Common myeloid progenitor, CD34-positive (primary cell): ENCODE measurements at regions of chr4 and their contacts with region 1.

Region 1: GRCh38 chr4:165493359-165493758 is 114.6 kb downstream of the CPE start:
- DNase-seq: peak; percentile 66 to 84 (median 81)
- H3K4me3 ChIP-seq: peak overlapping the region in 3 of 7 experiments; percentile 19 to 55 (median 20)
- H3K27ac ChIP-seq: no peak overlapping the region
- H3K4me1 ChIP-seq: peaks cover 0 to 6% (median 3%) of the 10 kb centered on the region in 4 experiments
- H3K27me3 ChIP-seq: peaks cover 0 to 7% (median 3%) of the 10 kb centered on the region in 5 experiments

Region 2: DNA sequence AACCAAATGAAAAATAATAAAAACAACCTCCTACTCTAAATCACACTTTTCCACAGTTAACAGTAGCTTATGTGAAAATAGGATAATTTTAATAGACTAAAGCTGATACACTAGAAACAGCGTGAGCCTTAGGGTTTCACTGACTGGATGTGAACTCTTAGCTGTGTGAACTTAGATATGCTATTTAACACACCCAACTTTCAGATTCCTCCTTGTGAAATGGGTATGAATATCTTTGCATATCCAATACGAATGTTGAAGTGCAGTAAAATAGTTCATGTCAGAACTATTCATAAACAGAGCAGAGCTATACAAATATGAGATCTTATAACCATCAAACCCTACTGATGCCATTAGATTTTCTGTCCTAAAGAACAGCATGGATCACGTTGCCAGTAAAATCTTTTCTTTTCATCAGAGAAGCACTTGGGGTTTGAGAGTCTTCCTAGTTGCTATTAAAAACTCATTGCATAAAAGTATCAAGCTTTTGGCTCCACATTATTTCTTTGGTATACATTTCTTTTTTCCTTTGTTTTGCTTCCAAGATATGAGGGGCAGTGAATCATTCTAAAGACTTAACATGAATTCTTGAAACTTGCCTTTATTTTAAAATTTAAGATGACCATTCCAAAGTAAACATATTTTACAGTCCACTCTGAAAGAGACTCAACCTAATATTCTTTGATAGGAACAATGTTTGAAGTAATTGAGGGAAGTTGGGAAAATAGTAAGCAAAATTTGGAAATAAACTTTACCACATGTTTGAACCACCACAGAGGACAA is 12.1 kb before region 1 on chr4:
- CTCF ChIA-PET with region 1: interaction called, 10 read pairs
- POLR2A ChIA-PET with region 1: no interaction called
- DNase-seq: no peak
- H3K4me3 ChIP-seq: no peak overlapping the region
- H3K27ac ChIP-seq: no peak overlapping the region
- H3K4me1 ChIP-seq: no peaks in the 10 kb centered on the region
- H3K27me3 ChIP-seq: no peaks in the 10 kb centered on the region

Region 3: DNA sequence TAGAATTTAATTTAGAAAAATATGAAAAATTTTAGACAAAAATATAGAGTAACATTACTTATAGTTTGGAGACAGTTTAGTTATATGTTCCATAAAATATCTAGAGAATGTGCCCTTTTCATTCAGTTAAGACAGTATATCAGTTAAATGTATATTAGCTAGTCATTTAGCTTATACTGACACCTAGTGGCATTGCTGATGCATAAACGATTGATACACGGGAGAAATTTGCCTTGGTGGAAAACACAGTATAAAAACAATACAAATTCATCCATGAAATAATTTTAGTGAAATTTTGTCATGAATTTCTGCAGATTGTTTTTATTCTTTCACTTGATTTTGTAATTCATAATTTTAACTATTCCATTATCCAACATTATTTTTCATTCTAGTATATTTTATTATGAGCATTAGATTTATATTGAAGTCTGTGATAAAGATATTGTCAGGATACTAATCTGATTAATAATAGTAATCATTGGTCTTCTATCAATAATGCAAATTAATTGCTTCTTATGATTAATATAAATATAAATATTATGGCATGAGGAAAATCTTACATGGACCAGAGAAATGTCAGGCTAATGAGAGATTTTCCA is 598.7 kb after region 1 on chr4:
- CTCF ChIA-PET with region 1: interaction called, 21 read pairs
- POLR2A ChIA-PET with region 1: no interaction called
- DNase-seq: peak; percentile 36 to 62 (median 51)
- H3K4me3 ChIP-seq: no peak overlapping the region
- H3K27ac ChIP-seq: no peak overlapping the region
- H3K4me1 ChIP-seq: no peaks in the 10 kb centered on the region
- H3K27me3 ChIP-seq: no peaks in the 10 kb centered on the region